OCI-LY7 (cell line): ENCODE measurements at regions of chr17 and their contacts with region 1.

Region 1: DNA sequence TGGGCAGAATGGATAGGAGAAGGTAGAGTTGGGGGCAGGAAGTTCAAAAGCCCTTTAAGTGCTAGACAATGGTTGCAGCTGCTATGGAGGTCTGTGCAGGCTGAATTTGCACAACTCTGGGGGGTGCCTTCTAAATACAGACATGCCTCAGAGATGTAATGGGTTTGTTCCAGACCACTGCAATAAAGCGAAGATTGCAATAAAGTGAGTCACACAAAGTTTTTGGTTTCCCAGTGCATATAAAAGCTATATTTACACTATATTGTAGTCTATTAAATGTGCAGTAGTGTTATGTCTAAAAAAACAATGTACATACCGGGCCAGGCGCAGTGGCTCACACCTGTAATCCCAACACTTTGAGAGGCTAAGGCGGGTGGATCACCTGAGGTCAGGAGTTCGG is 60.5 kb upstream of the MYOCD start:
- DNase-seq: no peak
- H3K4me3 ChIP-seq: no peak overlapping the region
- H3K27ac ChIP-seq: no peak overlapping the region
- H3K4me1 ChIP-seq: no peaks in the 10 kb centered on the region
- CTCF ChIP-seq: no peak

Region 2: GRCh38 chr17:12673788-12674187 is 68.6 kb after region 1 on chr17:
- CTCF ChIA-PET with region 1: no interaction called
- POLR2A ChIA-PET with region 1: no interaction called
- intact Hi-C with region 1: loop called (anchors 10 kb)
- DNase-seq: no peak
- H3K4me3 ChIP-seq: no peak overlapping the region
- H3K27ac ChIP-seq: no peak overlapping the region
- H3K4me1 ChIP-seq: no peaks in the 10 kb centered on the region
- CTCF ChIP-seq: no peak